ENCODE measurements at regions of chr4 and their contacts with region 1.

Region 1: DNA sequence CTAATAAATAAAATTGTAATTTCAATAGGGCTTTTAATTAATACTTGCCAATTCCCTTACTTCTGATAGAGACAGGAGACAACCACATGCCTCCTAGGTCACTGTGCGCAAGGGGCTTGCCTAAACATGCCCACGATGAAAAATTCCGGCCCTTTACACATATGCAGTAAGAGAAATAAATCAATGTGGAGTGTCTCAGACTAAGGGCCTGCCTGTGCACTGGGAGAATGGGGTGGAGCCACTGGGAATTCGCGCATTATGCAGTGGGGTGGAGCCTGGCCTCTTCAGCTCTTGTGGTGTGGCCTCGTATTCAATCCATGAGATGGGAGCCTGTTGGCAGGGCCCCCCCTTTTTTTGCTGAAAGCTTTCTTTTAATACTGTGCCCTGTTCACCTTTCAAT is 484.5 kb downstream of the PDGFC start:
- H3K4me3 Mint-ChIP-seq: no peak overlapping the region
- H3K27ac Mint-ChIP-seq: no peak overlapping the region
- H3K4me1 Mint-ChIP-seq: no peaks in the 10 kb centered on the region
- H3K27me3 Mint-ChIP-seq: no peaks in the 10 kb centered on the region

Region 2: DNA sequence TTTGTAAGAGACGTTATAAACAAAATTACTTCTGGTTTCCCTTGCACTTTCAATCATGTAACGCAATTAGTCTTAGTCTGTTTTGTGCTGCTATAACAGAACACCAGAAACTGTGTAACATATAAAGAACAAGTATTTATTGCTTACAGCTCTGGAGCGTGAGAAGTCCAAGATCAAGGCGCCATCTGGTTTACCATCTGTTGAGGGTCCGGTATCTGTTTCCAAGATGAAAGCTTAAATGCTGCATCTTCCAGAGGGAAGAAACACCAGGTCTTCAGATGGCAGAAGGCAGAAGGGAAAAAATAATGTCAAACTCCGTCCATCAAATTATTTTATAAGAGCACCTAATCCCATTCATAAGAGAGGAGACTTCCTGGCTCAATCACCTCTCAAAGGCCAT is 10.4 kb after region 1 on chr4:
- intact Hi-C with region 1: no loop called
- H3K4me3 Mint-ChIP-seq: no peak overlapping the region
- H3K27ac Mint-ChIP-seq: no peak overlapping the region
- H3K4me1 Mint-ChIP-seq: no peaks in the 10 kb centered on the region
- H3K27me3 Mint-ChIP-seq: no peaks in the 10 kb centered on the region

Region 3: GRCh38 chr4:156677131-156677531 is 190.0 kb after region 1 on chr4:
- intact Hi-C with region 1: loop called (anchors 10 kb)
- H3K4me3 Mint-ChIP-seq: no peak overlapping the region
- H3K27ac Mint-ChIP-seq: no peak overlapping the region
- H3K4me1 Mint-ChIP-seq: no peaks in the 10 kb centered on the region
- H3K27me3 Mint-ChIP-seq: no peaks in the 10 kb centered on the region

Region 4: DNA sequence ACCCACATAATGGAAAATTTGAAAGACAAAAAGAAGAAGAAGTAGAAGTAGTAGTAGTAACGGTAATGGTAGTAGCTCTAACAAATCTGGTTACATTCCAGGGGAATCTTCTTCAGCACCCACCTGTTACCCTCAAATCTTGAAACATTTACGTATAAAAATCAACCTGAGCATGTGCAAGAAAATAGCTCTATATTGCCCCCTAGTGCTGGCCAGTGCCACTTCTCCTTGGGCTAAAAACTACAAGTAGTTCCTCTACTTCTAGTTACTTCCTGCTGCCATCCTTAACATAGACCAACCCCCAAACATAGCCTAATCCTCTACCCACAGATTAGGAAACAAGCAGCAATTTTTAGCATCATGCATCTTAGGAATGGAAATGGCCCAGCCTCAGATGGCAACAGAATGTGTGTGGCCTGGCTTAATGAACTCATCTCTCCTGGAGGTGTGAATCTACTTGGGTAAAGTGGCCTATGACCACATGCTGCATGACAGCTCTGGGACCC is 481.4 kb after region 1 on chr4:
- intact Hi-C with region 1: no loop called
- H3K4me3 Mint-ChIP-seq: peak overlapping the region; percentile 79
- H3K27ac Mint-ChIP-seq: peak overlapping the region; percentile 96
- H3K4me1 Mint-ChIP-seq: peaks cover 60% of the 10 kb centered on the region
- H3K27me3 Mint-ChIP-seq: no peaks in the 10 kb centered on the region

Measured in dendritic cell treated with granulocyte-macrophage colony-stimulating factor and Interleukin-4, amounts not matched to agents 40 ng/mL and 50 ng/mL, for 4 days (primary cell).